ENCODE measurements at regions of chr19 and their contacts with region 1.

Region 1: GRCh38 chr19:39532233-39533002 is at the start of gene EID2B:
- DNase-seq: peak; percentile 97
- H3K4me3 Mint-ChIP-seq: peak within 1 kb of the TSS; percentile 81
- H3K27ac Mint-ChIP-seq: peak within 1 kb of the TSS; percentile 79
- H3K4me1 Mint-ChIP-seq: peaks cover 5% of the 10 kb centered on the region
- H3K27me3 Mint-ChIP-seq: no peaks in the 10 kb centered on the region
- CTCF ChIP-seq: peak; percentile 98
- total RNA-seq, gene EID2B: 2.0 and 3.3 TPM in 2 replicates

Region 2: DNA sequence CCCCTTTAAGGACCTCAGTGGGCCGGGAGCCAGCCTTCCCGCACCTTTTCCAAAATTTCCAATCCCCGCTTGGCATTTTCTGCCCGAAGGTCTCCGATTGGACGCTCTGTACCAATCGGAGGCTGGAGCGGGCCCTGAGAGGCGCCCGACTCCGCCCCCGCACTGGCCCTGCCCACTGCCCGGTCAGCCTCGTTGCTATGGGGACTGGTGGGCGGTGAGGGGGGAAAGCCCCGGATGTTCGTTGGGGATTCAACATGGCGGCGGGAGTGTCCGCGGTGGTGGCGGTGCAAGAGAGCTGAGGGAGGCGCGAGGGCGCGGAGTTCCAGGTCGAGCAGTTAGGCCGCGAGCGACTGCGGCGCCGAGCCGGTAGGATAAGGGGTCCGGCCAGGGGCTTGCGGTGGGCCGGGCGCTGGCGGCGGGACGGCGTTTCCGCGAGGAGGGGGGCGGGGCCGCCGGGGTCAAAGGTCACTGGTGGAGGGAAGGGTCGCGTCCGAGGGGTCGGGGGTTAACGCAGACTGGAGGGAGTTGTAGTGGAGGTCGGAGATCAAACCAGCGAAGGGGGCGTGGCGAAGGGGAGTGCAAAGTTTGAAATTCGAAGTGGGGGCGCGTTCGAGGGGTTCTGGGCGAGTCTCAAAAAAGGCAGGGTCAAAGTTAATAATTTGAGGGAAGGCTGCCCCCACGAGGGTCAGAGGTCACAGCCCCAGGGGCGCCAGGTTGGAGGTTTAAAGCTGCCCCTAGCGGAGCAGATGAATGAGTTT is 406.7 kb before region 1 on chr19 and contains the start of gene PAK4:
- CTCF ChIA-PET with region 1: no interaction called
- POLR2A ChIA-PET with region 1: no interaction called
- intact Hi-C with region 1: loop called (anchors 10 kb)
- DNase-seq: peak; percentile 99
- H3K4me3 Mint-ChIP-seq: peak within 1 kb of the TSS; percentile 87
- H3K27ac Mint-ChIP-seq: peak within 1 kb of the TSS; percentile 89
- H3K4me1 Mint-ChIP-seq: peaks cover 24% of the 10 kb centered on the region
- H3K27me3 Mint-ChIP-seq: no peaks in the 10 kb centered on the region
- CTCF ChIP-seq: no peak
- total RNA-seq, gene PAK4: 28.4 and 29.5 TPM in 2 replicates

Region 3: GRCh38 chr19:39332293-39332692 is 200.1 kb before region 1 on chr19:
- CTCF ChIA-PET with region 1: no interaction called
- POLR2A ChIA-PET with region 1: no interaction called
- intact Hi-C with region 1: no loop called
- DNase-seq: no peak
- H3K4me3 Mint-ChIP-seq: no peak overlapping the region
- H3K27ac Mint-ChIP-seq: no peak overlapping the region
- H3K4me1 Mint-ChIP-seq: no peaks in the 10 kb centered on the region
- H3K27me3 Mint-ChIP-seq: no peaks in the 10 kb centered on the region
- CTCF ChIP-seq: no peak

Region 4: GRCh38 chr19:39397360-39398296 is 134.8 kb before region 1 on chr19:
- CTCF ChIA-PET with region 1: interaction called, 18 read pairs
- POLR2A ChIA-PET with region 1: interaction called, 7 read pairs
- intact Hi-C with region 1: loop called (anchors 5 kb)
- DNase-seq: peak; percentile 92
- H3K4me3 Mint-ChIP-seq: peak overlapping the region; percentile 10
- H3K27ac Mint-ChIP-seq: peak overlapping the region; percentile 92
- H3K4me1 Mint-ChIP-seq: peaks cover 40% of the 10 kb centered on the region
- H3K27me3 Mint-ChIP-seq: no peaks in the 10 kb centered on the region
- CTCF ChIP-seq: peak; percentile 98

Region 5: GRCh38 chr19:39474139-39474622 is 58.2 kb before region 1 on chr19:
- CTCF ChIA-PET with region 1: interaction called, 41 read pairs
- POLR2A ChIA-PET with region 1: interaction called, 3 read pairs
- intact Hi-C with region 1: loop called (anchors 1 kb)
- DNase-seq: peak; percentile 46
- H3K4me3 Mint-ChIP-seq: no peak overlapping the region
- H3K27ac Mint-ChIP-seq: no peak overlapping the region
- H3K4me1 Mint-ChIP-seq: no peaks in the 10 kb centered on the region
- H3K27me3 Mint-ChIP-seq: no peaks in the 10 kb centered on the region
- CTCF ChIP-seq: peak; percentile 86